ENCODE measurements at regions of chr14 and their contacts with region 1.

Region 1: DNA sequence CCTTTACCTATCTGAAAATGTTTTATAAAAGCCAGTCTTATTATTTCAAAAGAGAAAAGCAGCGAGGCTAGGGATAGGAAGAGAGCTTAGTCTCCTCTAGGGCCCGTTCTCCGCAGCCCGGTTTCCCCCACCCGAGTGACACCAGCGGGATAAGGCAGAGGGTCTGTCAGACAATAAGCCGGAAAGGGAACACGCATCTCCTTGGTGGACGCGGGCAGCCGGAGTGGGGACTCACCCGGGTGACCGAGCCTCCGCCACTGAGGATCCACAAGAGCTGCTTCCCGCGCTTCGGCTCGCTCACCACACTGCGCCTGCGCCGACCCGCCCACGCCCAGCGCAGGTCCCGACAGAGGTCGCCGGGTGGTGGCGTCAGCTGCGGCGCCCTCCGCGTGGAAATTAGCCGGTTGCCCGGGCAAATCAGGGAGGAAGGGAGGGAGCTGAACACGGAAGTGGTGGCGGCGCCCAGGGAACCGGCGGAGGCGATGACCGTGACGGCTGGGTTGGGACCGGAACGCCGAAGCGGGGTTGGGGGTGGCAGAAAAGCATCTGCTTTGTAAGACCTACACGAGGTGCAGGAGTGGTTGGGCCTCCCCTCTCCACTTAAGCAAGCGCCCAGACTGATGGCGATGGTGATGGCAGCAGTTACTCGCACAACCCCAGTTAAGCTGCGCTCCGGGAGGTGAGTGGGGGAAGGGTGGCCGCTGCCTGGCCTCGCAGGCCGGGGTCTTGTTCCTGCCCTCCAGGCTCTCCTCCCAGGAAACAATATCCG is at the starts of genes SOCS4 and WDHD1:
- DNase-seq: peak; percentile 99
- ATAC-seq: peak; percentile 92
- H3K4me3 ChIP-seq: peak within 1 kb of the TSS; percentile 75
- H3K27ac ChIP-seq: peak within 1 kb of the TSS; percentile 55
- H3K4me1 ChIP-seq: peaks cover 34% of the 10 kb centered on the region
- H3K27me3 ChIP-seq: no peaks in the 10 kb centered on the region
- CTCF ChIP-seq: peak; percentile 34
- total RNA-seq, gene SOCS4: 21.9 and 22.5 TPM in 2 replicates
- total RNA-seq, gene WDHD1: 45.9 and 47.1 TPM in 2 replicates

Region 2: DNA sequence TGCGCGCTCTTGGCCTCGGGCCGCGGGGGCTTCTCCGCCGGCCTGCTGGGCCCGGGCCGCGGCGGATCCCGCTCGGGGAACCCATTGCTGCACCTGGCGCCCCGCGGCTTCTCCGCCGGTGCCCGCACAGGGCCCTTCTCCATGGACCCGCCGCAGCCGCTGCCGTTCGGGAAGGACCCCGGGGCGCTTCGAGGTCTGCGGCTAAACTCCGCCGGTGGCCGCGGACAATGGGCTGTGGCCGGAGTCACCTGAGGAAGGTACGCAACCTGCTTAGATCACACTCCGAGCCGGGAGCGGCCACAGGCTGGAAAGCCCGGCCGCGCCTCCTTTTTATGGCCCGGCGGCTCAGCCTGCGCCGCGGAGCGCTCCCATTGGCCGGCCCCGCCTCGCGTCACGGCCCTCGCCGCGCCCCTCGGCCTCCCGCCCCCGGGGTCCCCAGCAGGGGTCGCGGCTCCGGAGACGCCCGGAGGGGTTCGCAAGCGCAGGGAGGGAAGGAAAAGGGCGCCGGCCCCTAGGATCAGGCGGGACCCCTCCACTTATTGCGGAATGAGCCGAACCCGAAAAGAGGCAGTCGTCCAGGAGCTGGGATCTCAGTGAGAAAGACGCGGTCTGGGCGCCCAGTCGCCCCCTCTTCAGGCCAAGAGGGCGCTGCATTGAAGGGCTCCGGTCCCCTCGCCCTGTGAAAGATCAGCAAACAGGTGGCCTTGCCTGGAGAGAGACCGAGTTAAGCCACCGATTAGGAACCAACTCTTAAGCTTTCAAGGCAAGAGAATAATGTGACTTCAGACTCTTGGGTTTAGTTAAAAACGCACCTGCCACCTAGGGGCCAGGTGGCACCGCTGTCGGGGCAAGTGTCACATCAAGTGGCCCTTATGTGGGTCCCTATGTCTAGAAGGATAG is 124.2 kb before region 1 on chr14 and contains the start of gene GCH1:
- CTCF ChIA-PET with region 1: interaction called, 3 read pairs
- POLR2A ChIA-PET with region 1: no interaction called
- intact Hi-C with region 1: loop called (anchors 1 kb)
- DNase-seq: peak; percentile 92
- ATAC-seq: peak; percentile 87
- H3K4me3 ChIP-seq: peak within 1 kb of the TSS; percentile 86
- H3K27ac ChIP-seq: peak within 1 kb of the TSS; percentile 41
- H3K4me1 ChIP-seq: peaks cover 9% of the 10 kb centered on the region
- H3K27me3 ChIP-seq: no peaks in the 10 kb centered on the region
- CTCF ChIP-seq: peak; percentile 93
- total RNA-seq, gene GCH1: 26.6 and 26.9 TPM in 2 replicates

Region 3: GRCh38 chr14:54967496-54967895 is 59.5 kb before region 1 on chr14:
- CTCF ChIA-PET with region 1: no interaction called
- POLR2A ChIA-PET with region 1: no interaction called
- intact Hi-C with region 1: no loop called
- DNase-seq: no peak
- ATAC-seq: no peak
- H3K4me3 ChIP-seq: no peak overlapping the region
- H3K27ac ChIP-seq: no peak overlapping the region
- H3K4me1 ChIP-seq: no peaks in the 10 kb centered on the region
- H3K27me3 ChIP-seq: no peaks in the 10 kb centered on the region
- CTCF ChIP-seq: no peak

Region 4: GRCh38 chr14:55411426-55412389 is 384.7 kb after region 1 on chr14 and contains the start of gene ATG14:
- CTCF ChIA-PET with region 1: no interaction called
- POLR2A ChIA-PET with region 1: no interaction called
- intact Hi-C with region 1: no loop called
- DNase-seq: peak; percentile 94
- ATAC-seq: peak; percentile 93
- H3K4me3 ChIP-seq: peak within 1 kb of the TSS; percentile 80
- H3K27ac ChIP-seq: peak within 1 kb of the TSS; percentile 71
- H3K4me1 ChIP-seq: peaks cover 33% of the 10 kb centered on the region
- H3K27me3 ChIP-seq: no peaks in the 10 kb centered on the region
- CTCF ChIP-seq: no peak
- total RNA-seq, gene ATG14: 20.2 and 22.5 TPM in 2 replicates